Activated CD4-positive, alpha-beta memory T cell treated with anti-CD3 and anti-CD28 coated beads, Interleukin-2, amount 10 ng/mL, durations not matched to agents 7 days and 5 days (primary cell): ENCODE measurements at regions of chrX and their contacts with region 1.

Region 1: DNA sequence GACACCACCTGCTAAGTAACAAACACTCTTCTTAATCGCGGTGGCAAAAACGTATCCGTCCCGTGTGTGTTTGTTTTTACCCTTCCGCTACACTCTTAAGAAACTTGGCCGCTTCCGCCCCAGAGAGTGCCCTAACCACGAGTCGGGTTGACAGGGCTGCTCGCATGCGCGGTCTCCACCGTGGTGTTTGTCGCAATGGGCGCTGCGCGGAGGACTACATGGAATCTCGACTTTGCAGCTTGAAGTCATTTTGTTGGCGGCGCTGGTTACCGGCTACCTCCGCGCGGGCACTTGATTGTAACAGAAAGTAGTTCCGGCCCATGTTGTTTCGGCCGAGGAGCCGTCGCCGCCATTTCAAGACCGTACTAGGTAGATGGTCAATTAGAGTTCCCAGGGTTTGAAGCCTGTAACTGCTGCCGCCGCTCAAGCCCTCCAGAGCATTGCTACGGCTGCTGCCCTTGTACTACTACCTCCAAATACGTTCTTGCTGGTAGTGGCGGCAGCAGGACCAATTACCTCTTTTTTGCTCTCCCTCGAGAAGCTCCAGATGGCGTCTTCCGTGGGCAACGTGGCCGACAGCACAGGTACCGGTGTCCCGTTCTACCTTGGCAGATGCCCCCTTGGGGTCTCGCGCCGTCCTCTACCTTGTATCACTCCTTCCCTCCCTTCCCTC is at the start of gene OGT:
- DNase-seq: peak; percentile 95
- H3K4me3 Mint-ChIP-seq: peak within 1 kb of the TSS; percentile 96
- H3K27ac Mint-ChIP-seq: peak within 1 kb of the TSS; percentile 99
- H3K4me1 Mint-ChIP-seq: peaks cover 22% of the 10 kb centered on the region
- H3K27me3 Mint-ChIP-seq: no peaks in the 10 kb centered on the region
- total RNA-seq, gene OGT: 360 to 382 TPM

Region 2: GRCh38 chrX:71181910-71182799 is 350.7 kb before region 1 on chrX:
- CTCF ChIA-PET with region 1: no interaction called
- POLR2A ChIA-PET with region 1: interaction called, 17 read pairs
- DNase-seq: peak; percentile 86
- H3K4me3 Mint-ChIP-seq: peak overlapping the region; percentile 85
- H3K27ac Mint-ChIP-seq: peak overlapping the region; percentile 97
- H3K4me1 Mint-ChIP-seq: peaks cover 29% of the 10 kb centered on the region
- H3K27me3 Mint-ChIP-seq: no peaks in the 10 kb centered on the region

Region 3: GRCh38 chrX:71365876-71366673 is 166.8 kb before region 1 on chrX and contains the start of gene TAF1:
- CTCF ChIA-PET with region 1: interaction called, 4 read pairs
- POLR2A ChIA-PET with region 1: interaction called, 101 read pairs
- DNase-seq: peak; percentile 93
- H3K4me3 Mint-ChIP-seq: peak within 1 kb of the TSS; percentile 92
- H3K27ac Mint-ChIP-seq: peak within 1 kb of the TSS; percentile 99
- H3K4me1 Mint-ChIP-seq: peaks cover 30% of the 10 kb centered on the region
- H3K27me3 Mint-ChIP-seq: no peaks in the 10 kb centered on the region
- total RNA-seq, gene TAF1: 29.0 to 33.0 TPM

Region 4: GRCh38 chrX:71514367-71515038 is 18.4 kb before region 1 on chrX:
- CTCF ChIA-PET with region 1: no interaction called
- POLR2A ChIA-PET with region 1: interaction called, 14 read pairs
- DNase-seq: peak; percentile 26
- H3K4me3 Mint-ChIP-seq: no peak overlapping the region
- H3K27ac Mint-ChIP-seq: no peak overlapping the region
- H3K4me1 Mint-ChIP-seq: peaks cover 13% of the 10 kb centered on the region
- H3K27me3 Mint-ChIP-seq: no peaks in the 10 kb centered on the region

Region 5: DNA sequence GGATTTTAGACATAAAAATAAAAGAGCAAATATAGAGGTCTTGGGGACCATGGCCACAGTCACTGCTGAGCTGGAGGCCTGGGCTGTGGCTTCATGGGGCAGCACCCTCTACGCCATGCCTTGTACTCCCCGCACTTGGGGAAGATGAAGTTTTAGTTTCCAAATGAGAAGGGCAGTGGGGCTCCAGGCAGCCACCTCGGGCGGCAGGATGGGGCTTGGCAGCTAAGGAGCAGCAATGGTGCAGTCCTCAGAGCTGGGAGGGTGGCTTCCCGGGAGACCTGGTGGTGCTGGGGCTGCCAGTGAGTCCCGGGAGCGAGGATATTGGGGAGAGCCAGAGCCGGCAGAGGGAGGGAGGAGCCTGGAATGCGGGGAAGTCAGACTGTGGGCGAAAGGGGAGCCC is 83.1 kb after region 1 on chrX:
- CTCF ChIA-PET with region 1: no interaction called
- POLR2A ChIA-PET with region 1: interaction called, 87 read pairs
- DNase-seq: no peak
- H3K4me3 Mint-ChIP-seq: peak overlapping the region; percentile 91
- H3K27ac Mint-ChIP-seq: peak overlapping the region; percentile 90
- H3K4me1 Mint-ChIP-seq: peaks cover 67% of the 10 kb centered on the region
- H3K27me3 Mint-ChIP-seq: no peaks in the 10 kb centered on the region